ENCODE measurements at regions of chr12 and their contacts with region 1.

Region 1: DNA sequence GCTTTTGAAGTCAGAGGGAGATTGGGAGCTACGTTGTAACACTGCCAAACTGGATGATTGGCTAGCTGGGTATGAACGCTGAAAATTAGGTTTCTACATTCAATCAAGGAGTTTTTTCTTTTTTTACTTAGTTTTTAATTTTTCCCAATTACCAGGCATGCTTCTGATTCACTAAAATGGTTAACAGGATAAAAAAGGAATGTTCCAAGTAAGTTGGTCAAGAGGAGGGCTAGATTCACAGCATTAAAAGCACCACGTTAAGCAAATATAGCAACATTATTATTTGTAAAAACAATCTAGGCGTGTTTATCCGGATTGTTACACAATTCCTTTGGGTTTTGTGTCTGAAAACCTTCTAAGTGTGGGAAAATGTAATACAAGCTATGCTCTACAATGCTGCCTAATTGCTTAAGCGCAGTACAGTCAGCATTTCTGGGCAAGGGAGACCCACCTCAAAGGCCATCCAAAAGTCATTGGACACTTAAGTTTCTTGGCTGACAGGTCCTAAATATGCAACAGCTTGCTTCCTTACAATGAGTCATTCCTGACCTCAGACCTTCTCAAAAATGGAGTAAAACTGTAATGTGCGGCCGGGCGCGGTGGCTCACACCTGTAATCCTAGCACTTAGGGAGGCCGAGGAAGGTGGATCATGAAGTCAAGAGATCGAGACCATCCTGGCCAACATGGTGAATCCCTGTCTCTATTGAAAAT is 1.2 kb downstream of the RPLP0 start:
- DNase-seq: no peak
- ATAC-seq: no peak
- H3K4me3 Mint-ChIP-seq: peak overlapping the region; percentile 98
- H3K27ac Mint-ChIP-seq: peak overlapping the region; percentile 97
- H3K4me1 Mint-ChIP-seq: peaks cover 28% of the 10 kb centered on the region
- H3K27me3 Mint-ChIP-seq: no peaks in the 10 kb centered on the region

Region 2: GRCh38 chr12:120110550-120111501 is 88.9 kb before region 1 on chr12:
- POLR2A ChIA-PET with region 1: interaction called, 41 read pairs
- DNase-seq: peak; percentile 68
- ATAC-seq: peak; percentile 90
- H3K4me3 Mint-ChIP-seq: peak overlapping the region; percentile 81
- H3K27ac Mint-ChIP-seq: peak overlapping the region; percentile 74
- H3K4me1 Mint-ChIP-seq: peaks cover 50% of the 10 kb centered on the region
- H3K27me3 Mint-ChIP-seq: no peaks in the 10 kb centered on the region

Region 3: GRCh38 chr12:120172053-120172452 is 27.7 kb before region 1 on chr12:
- POLR2A ChIA-PET with region 1: interaction called, 13 read pairs
- DNase-seq: no peak
- ATAC-seq: no peak
- H3K4me3 Mint-ChIP-seq: no peak overlapping the region
- H3K27ac Mint-ChIP-seq: no peak overlapping the region
- H3K4me1 Mint-ChIP-seq: peaks cover 6% of the 10 kb centered on the region
- H3K27me3 Mint-ChIP-seq: no peaks in the 10 kb centered on the region

Region 4: GRCh38 chr12:120220838-120221575 is 21.3 kb after region 1 on chr12:
- POLR2A ChIA-PET with region 1: interaction called, 62 read pairs
- DNase-seq: no peak
- ATAC-seq: no peak
- H3K4me3 Mint-ChIP-seq: no peak overlapping the region
- H3K27ac Mint-ChIP-seq: no peak overlapping the region
- H3K4me1 Mint-ChIP-seq: peaks cover 11% of the 10 kb centered on the region
- H3K27me3 Mint-ChIP-seq: no peaks in the 10 kb centered on the region

Region 5: DNA sequence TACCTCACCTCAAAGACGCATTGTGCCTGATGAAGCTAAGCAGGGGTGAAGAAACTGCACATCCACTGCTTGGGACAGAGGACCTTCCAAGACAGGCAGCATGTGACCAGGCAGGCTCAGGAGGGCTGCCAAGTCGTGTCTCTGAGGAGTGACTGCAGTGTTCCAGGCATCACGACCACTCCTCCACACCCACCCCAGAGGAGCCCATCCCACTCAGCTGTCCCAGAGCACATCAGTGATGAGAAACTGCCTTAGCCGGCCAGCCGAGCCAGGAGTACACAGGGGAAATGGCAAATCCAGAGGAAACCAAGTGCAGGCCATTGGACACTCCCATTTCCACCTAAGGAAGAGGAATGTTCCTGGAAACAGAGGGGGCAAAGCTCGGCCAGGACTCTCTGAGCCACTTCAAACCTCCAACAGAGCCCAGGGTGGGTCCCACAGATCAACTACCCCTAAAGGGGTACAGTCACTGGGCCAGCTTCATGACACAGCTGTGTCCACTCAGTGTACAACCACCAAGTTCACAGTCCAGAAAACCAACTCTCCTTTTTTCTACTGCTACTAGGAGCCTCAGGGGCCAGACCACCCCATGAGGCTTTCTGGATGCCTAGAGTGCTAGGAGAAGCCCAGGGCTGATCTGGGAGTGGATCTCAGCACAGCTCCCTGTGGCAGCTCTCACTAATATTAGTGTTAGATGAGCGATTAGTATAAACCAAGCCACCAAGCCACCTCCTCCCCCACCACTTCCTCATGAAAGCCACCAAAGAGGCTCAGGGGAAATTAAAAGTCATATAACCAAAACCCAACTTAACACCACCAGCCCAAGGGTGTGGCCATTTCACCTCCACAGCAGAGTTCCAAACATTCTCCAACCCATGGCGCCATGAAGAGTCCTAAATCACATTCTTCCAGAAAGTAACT is 50.4 kb after region 1 on chr12:
- POLR2A ChIA-PET with region 1: interaction called, 42 read pairs
- DNase-seq: peak; percentile 48
- ATAC-seq: peak; percentile 4
- H3K4me3 Mint-ChIP-seq: peak overlapping the region; percentile 80
- H3K27ac Mint-ChIP-seq: peak overlapping the region; percentile 90
- H3K4me1 Mint-ChIP-seq: peaks cover 59% of the 10 kb centered on the region
- H3K27me3 Mint-ChIP-seq: peaks cover 2% of the 10 kb centered on the region